ENCODE measurements at regions of chr2 and their contacts with region 1.

Region 1: GRCh38 chr2:157509744-157510143 is 65.9 kb upstream of the CYTIP start:
- DNase-seq: no peak
- ATAC-seq: no peak
- H3K4me3 ChIP-seq: no peak overlapping the region
- H3K4me1 ChIP-seq: no peaks in the 10 kb centered on the region
- CTCF ChIP-seq: no peak

Region 2: GRCh38 chr2:157761520-157761919 is 251.8 kb after region 1 on chr2:
- intact Hi-C with region 1: loop called in 1 of 2 experiments (anchors 10 kb)
- DNase-seq: no peak
- ATAC-seq: no peak
- H3K4me3 ChIP-seq: no peak overlapping the region
- H3K4me1 ChIP-seq: no peaks in the 10 kb centered on the region
- CTCF ChIP-seq: no peak

Measured in mucosa of descending colon (tissue), 3 donors.